WTC11 (cell line): ENCODE measurements at regions of chr10 and their contacts with region 1.

Region 1: DNA sequence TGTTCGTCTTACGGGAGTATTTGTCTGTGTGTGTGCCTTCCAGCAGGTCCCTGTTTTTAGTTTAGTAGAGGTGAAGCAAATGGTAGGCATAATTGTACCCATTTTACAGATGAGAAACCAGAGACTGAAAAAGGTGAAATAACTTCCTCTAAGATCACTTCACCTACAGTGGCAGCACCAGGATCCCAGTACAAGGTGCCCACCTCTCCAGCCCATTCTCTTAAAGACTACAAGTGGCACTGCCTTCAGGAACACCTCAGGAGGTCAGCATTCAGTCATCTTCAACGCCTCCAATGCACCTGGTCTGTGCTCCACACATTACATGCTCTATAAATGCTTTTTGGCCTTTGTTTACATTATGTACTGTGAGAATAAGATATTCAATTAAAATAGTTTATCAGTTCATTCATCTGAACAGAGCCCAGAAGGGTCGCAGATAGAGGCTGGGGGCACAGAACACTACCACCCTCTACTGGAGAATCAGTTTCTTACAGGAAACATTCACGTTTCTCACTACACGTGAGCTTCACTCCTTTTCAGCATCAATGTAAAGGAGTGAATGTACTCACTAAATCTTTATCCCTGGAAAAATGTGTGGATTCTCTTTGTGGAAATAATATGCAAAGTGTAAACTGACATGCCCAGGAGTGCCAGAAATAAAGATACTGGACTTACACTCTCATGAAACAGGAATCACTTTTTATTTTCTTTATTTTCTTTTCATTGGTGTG is 45.5 kb upstream of the ABLIM1 start:
- DNase-seq: no peak
- ATAC-seq: peak; percentile 93
- H3K4me3 Mint-ChIP-seq: no peak overlapping the region
- H3K27ac Mint-ChIP-seq: no peak overlapping the region
- H3K4me1 Mint-ChIP-seq: peaks cover 6% of the 10 kb centered on the region; the same call in 1 of the 2 replicates
- H3K27me3 Mint-ChIP-seq: peaks cover 3% of the 10 kb centered on the region
- CTCF ChIP-seq: peak; percentile 62

Region 2: GRCh38 chr10:114550756-114551635 is 152.5 kb before region 1 on chr10:
- CTCF ChIA-PET with region 1: interaction called, 17 read pairs
- POLR2A ChIA-PET with region 1: no interaction called
- DNase-seq: no peak
- ATAC-seq: peak; percentile 65
- H3K4me3 Mint-ChIP-seq: no peak overlapping the region
- H3K27ac Mint-ChIP-seq: no peak overlapping the region
- H3K4me1 Mint-ChIP-seq: no peaks in the 10 kb centered on the region
- H3K27me3 Mint-ChIP-seq: no peaks in the 10 kb centered on the region
- CTCF ChIP-seq: peak; percentile 29; the same call in 1 of the 2 replicates

Region 3: DNA sequence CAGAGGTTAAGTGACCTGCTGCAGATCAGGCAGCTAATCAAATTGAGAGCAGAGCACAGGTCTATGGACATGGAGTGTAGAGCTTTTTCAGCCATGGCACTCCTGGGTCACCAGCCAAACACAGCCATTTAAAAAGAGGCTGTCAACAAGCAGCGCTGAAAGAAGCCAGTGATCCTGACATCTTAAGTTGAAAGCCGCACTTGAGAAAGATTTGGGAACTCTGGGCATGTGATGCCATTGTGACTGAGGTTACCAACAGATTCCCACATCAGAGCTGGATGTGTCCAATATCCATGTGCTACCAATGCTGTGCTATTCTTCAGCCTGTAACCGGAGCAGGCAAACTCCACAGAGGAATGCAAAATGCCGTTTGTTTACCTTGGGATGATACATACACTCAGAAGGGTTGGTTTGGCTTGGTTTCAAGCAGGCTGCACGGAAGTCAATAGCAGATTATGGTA is 10.8 kb after region 1 on chr10:
- CTCF ChIA-PET with region 1: interaction called, 11 read pairs
- POLR2A ChIA-PET with region 1: no interaction called
- DNase-seq: no peak
- ATAC-seq: 0 out of 2 replicates have a peak, but pooled peaks have one; percentile 9
- H3K4me3 Mint-ChIP-seq: no peak overlapping the region
- H3K27ac Mint-ChIP-seq: no peak overlapping the region; the same call in 1 of the 2 replicates
- H3K4me1 Mint-ChIP-seq: peaks cover 38% of the 10 kb centered on the region
- H3K27me3 Mint-ChIP-seq: no peaks in the 10 kb centered on the region
- CTCF ChIP-seq: no peak

Region 4: GRCh38 chr10:114821293-114821914 is 117.9 kb after region 1 on chr10 and contains the start of gene FHIP2A:
- CTCF ChIA-PET with region 1: interaction called, 12 read pairs
- POLR2A ChIA-PET with region 1: no interaction called
- DNase-seq: peak; percentile 82
- ATAC-seq: peak; percentile 95
- H3K4me3 Mint-ChIP-seq: peak within 1 kb of the TSS; percentile 88
- H3K27ac Mint-ChIP-seq: peak within 1 kb of the TSS; percentile 82
- H3K4me1 Mint-ChIP-seq: peaks cover 10% of the 10 kb centered on the region
- H3K27me3 Mint-ChIP-seq: no peaks in the 10 kb centered on the region
- CTCF ChIP-seq: peak; percentile 63
- total RNA-seq, gene FHIP2A: 14.3 to 15.5 TPM (median 14.6 TPM) in 3 replicates

Region 5: GRCh38 chr10:115030483-115031198 is 327.1 kb after region 1 on chr10:
- CTCF ChIA-PET with region 1: no interaction called
- POLR2A ChIA-PET with region 1: no interaction called
- DNase-seq: no peak
- ATAC-seq: peak; percentile 74
- H3K4me3 Mint-ChIP-seq: no peak overlapping the region
- H3K27ac Mint-ChIP-seq: no peak overlapping the region; the same call in 1 of the 2 replicates
- H3K4me1 Mint-ChIP-seq: peaks cover 8% of the 10 kb centered on the region
- H3K27me3 Mint-ChIP-seq: no peaks in the 10 kb centered on the region
- CTCF ChIP-seq: no peak